ENCODE measurements at regions of chr21 and their contacts with region 1.

Region 1: DNA sequence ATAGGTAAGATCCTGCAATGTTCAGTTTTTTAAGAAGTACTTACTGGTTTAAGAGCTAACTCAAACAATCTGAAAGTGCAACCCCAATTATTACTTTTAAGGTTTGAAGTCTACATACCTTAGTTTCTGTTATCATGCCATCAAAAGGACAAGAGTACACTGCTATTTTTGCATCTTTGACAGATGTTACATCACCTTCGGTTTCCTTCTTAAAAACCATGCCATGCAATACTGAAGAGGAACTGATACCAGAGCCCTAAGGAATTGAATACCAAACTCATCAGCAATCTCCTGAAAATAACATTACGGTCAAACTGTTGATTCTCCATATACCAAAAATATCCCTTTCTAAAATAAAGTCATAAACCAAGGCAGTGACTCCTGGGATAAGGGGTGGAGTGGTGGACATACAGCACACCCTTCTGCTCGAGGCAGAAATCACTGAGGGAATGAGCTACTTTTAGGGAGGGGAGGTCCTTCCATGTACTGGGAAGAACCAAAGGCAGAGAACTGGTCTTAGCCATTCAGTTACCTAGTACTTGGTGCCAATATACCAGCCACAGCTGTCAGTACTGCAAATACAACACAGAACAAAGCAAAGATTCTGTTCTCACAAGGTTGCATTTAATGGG is 8.5 kb downstream of the CCT8 start:
- DNase-seq: peak; percentile 47 to 71 (median 63)
- H3K4me3 ChIP-seq: peak overlapping the region in 1 of 3 experiments; percentile 56
- H3K4me3 Mint-ChIP-seq: peak overlapping the region in 1 of 2 donors; percentile 67
- H3K27ac ChIP-seq: peak overlapping the region; percentile 20 to 77
- H3K27ac Mint-ChIP-seq: peak overlapping the region; percentile 74 to 90 (median 85)
- H3K4me1 ChIP-seq: peaks cover 16% of the 10 kb centered on the region in 2 donors
- H3K4me1 Mint-ChIP-seq: peaks cover 14% of the 10 kb centered on the region
- H3K27me3 ChIP-seq: no peaks in the 10 kb centered on the region
- H3K27me3 Mint-ChIP-seq: no peaks in the 10 kb centered on the region
- CTCF ChIP-seq: no peak

Region 2: DNA sequence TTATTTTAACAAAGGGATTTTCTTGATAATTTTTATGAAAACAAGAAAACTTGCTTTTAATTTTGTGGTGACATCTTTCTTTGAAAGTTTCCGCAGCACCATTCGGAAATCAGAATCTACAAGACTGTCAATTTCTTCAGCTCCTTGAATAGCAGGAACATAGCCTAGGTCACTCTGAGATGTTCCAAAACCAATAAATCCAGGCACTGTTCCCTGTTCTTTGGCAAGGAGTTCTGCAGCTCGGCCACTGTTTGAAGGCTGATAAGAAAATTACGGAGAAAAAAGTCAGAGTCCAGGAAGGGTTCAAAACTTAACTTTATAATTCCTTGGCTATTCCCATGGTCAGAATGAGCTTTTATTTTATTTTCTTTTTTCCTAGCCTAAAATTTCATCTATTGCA is 78.3 kb before region 1 on chr21:
- intact Hi-C with region 1: loop called in 1 of 2 experiments (anchors 10 kb)
- DNase-seq: no peak
- H3K4me3 ChIP-seq: no peak overlapping the region
- H3K4me3 Mint-ChIP-seq: no peak overlapping the region
- H3K27ac ChIP-seq: no peak overlapping the region
- H3K27ac Mint-ChIP-seq: no peak overlapping the region
- H3K4me1 ChIP-seq: peaks cover under 1 to 9% of the 10 kb centered on the region in 2 donors
- H3K4me1 Mint-ChIP-seq: peaks cover 11% of the 10 kb centered on the region
- H3K27me3 ChIP-seq: no peaks in the 10 kb centered on the region
- H3K27me3 Mint-ChIP-seq: no peaks in the 10 kb centered on the region
- CTCF ChIP-seq: no peak

Region 3: DNA sequence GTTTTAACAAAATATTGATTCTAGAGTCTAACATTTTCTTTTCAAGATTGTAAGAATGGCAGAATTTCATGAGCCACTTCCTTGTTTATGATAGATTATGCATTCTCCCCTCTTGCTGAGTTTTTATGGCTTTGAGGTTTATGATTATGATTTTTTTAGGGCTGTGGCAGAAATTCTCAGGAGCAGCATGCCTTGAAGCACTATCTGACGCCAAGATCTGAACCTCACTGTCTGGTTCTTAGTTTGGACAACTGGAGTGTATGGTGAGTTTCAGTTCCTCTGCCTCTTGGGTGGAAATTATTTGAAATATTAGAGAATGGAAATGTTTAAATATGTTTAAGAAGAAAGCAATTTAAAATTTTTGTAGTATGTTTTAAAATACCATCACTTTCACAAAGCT is 30.3 kb before region 1 on chr21:
- intact Hi-C with region 1: loop called (anchors 5 kb)
- DNase-seq: no peak
- H3K4me3 ChIP-seq: no peak overlapping the region
- H3K4me3 Mint-ChIP-seq: no peak overlapping the region
- H3K27ac ChIP-seq: no peak overlapping the region
- H3K27ac Mint-ChIP-seq: no peak overlapping the region
- H3K4me1 ChIP-seq: no peaks in the 10 kb centered on the region
- H3K4me1 Mint-ChIP-seq: no peaks in the 10 kb centered on the region
- H3K27me3 ChIP-seq: no peaks in the 10 kb centered on the region
- H3K27me3 Mint-ChIP-seq: no peaks in the 10 kb centered on the region
- CTCF ChIP-seq: no peak

Region 4: GRCh38 chr21:29351691-29352090 is 286.7 kb after region 1 on chr21:
- intact Hi-C with region 1: no loop called
- DNase-seq: no peak
- H3K4me3 ChIP-seq: no peak overlapping the region
- H3K4me3 Mint-ChIP-seq: no peak overlapping the region
- H3K27ac ChIP-seq: no peak overlapping the region
- H3K27ac Mint-ChIP-seq: no peak overlapping the region
- H3K4me1 ChIP-seq: peaks cover 34 to 39% of the 10 kb centered on the region in 2 donors
- H3K4me1 Mint-ChIP-seq: peaks cover 33% of the 10 kb centered on the region
- H3K27me3 ChIP-seq: no peaks in the 10 kb centered on the region
- H3K27me3 Mint-ChIP-seq: peaks cover 0 to 6% (median 0%) of the 10 kb centered on the region in 3 donors
- CTCF ChIP-seq: no peak

Measured in CD14-positive monocyte (primary cell).